Posterior vena cava (tissue), 2 donors: ENCODE measurements at regions of chr14 and their contacts with region 1.

Region 1: DNA sequence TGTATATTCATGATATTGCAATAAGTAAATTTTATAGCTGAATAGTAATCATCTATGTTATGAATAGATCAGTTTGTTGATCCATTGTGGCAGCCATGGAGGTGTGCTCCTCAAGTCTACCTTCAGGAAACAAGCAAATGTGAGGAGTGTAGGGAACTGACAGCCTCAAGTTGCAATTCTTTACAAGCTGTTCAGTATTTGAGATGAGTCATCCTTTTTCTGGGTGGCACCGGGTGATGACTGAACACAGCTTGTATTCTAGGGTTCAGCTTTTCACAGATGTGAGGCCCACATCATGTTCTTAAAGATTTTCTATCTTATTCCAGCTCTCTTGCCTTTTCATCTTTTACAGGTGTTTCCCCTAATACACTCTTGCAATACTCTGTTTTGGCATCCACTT is 452.4 kb downstream of the KCNH5 start:
- DNase-seq: no peak

Region 2: GRCh38 chr14:62138593-62138992 is 454.3 kb before region 1 on chr14:
- intact Hi-C with region 1: no loop called
- DNase-seq: no peak

Region 3: DNA sequence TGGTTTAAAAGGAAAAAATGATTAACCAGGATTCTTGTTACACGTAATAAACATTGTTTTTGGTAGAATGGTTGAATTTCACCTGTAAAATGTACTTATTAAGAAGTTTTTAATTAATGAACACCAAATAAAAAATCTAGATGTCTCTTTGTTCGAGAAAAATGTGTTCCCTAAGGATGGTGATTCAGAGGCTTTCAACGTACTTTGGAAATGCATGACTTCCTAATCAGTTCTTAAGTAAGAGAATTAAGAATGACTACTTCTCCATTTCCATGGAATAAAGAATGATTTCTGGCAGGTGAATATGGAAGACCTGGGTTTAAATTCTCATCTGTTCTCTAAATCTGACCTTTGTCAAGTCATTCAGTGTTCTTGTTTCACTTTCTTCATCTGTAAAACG is 23.8 kb after region 1 on chr14:
- intact Hi-C with region 1: loop called in 1 of 2 experiments (anchors 1 kb)
- DNase-seq: no peak

Region 4: GRCh38 chr14:62629176-62629725 is 36.4 kb after region 1 on chr14:
- intact Hi-C with region 1: no loop called
- DNase-seq: no peak

Region 5: GRCh38 chr14:62807636-62808035 is 214.8 kb after region 1 on chr14:
- intact Hi-C with region 1: loop called in 1 of 2 experiments (anchors 2 kb)
- DNase-seq: no peak